Activated T-helper 2 cell treated with anti-CD3 and anti-CD28 coated beads, Interferon-gamma antibody, Interleukin-2, Interleukin-4, amounts not matched to agents 10 μg/mL and 5 μg/mL and 100 μg/mL, durations not matched to agents 14 hours and 24 hours and 36 hours (primary cell): ENCODE measurements at regions of chr15 and their contacts with region 1.

Region 1: GRCh38 chr15:31442203-31443111 is 115.8 kb downstream of the KLF13 start:
- DNase-seq: no peak
- H3K4me3 Mint-ChIP-seq: no peak overlapping the region
- H3K27ac Mint-ChIP-seq: peak overlapping the region; percentile 68
- H3K4me1 Mint-ChIP-seq: peaks cover 54% of the 10 kb centered on the region
- H3K27me3 Mint-ChIP-seq: no peaks in the 10 kb centered on the region

Region 2: GRCh38 chr15:31292391-31293015 is 150.0 kb before region 1 on chr15:
- intact Hi-C with region 1: no loop called
- DNase-seq: peak; percentile 1
- H3K4me3 Mint-ChIP-seq: no peak overlapping the region
- H3K27ac Mint-ChIP-seq: no peak overlapping the region
- H3K4me1 Mint-ChIP-seq: no peaks in the 10 kb centered on the region
- H3K27me3 Mint-ChIP-seq: peaks cover 72% of the 10 kb centered on the region

Region 3: DNA sequence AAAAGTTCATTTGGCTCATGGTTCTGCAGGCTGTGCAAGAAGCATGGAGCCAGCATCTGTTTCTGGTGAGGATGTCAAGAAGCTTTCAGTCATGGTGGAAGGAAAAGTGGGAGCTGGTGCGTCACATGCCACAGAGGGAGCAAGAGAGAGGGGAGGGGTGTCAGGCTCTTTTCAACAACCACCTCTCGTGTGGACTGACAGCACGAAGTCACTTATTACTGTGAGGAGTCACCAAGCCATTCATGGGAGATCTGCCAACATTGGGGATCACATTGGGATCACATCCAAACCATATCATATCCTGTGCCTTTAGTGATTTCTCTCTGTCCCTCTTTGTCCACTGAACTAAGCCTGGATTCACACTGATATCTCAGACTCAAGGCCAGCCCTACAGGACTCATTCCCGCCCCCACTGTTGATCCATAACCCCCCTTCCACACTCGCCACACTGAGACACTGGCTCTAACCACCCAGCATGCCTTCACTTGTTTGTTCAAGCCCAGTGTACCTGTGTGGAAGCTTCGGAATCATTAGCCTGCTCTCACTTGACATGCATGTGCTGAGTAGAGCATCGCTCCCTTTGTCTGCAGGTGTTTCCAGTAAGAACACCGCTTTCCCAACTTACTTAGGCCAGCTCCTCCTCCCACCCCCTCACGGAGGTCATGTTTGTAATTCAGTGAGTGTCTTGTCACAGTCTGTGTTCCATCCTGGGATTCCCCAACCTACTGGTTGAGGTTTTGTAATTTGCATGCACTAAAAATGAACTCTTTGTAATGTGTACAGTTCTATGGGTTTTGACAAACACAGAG is 16.3 kb after region 1 on chr15:
- intact Hi-C with region 1: loop called (anchors 1 kb)
- DNase-seq: no peak
- H3K4me3 Mint-ChIP-seq: peak overlapping the region; percentile 48
- H3K27ac Mint-ChIP-seq: peak overlapping the region; percentile 80
- H3K4me1 Mint-ChIP-seq: peaks cover 26% of the 10 kb centered on the region
- H3K27me3 Mint-ChIP-seq: no peaks in the 10 kb centered on the region

Region 4: GRCh38 chr15:31740203-31740602 is 297.7 kb after region 1 on chr15:
- intact Hi-C with region 1: no loop called
- DNase-seq: no peak
- H3K4me3 Mint-ChIP-seq: no peak overlapping the region
- H3K27ac Mint-ChIP-seq: no peak overlapping the region
- H3K4me1 Mint-ChIP-seq: no peaks in the 10 kb centered on the region
- H3K27me3 Mint-ChIP-seq: peaks cover 1% of the 10 kb centered on the region

Region 5: DNA sequence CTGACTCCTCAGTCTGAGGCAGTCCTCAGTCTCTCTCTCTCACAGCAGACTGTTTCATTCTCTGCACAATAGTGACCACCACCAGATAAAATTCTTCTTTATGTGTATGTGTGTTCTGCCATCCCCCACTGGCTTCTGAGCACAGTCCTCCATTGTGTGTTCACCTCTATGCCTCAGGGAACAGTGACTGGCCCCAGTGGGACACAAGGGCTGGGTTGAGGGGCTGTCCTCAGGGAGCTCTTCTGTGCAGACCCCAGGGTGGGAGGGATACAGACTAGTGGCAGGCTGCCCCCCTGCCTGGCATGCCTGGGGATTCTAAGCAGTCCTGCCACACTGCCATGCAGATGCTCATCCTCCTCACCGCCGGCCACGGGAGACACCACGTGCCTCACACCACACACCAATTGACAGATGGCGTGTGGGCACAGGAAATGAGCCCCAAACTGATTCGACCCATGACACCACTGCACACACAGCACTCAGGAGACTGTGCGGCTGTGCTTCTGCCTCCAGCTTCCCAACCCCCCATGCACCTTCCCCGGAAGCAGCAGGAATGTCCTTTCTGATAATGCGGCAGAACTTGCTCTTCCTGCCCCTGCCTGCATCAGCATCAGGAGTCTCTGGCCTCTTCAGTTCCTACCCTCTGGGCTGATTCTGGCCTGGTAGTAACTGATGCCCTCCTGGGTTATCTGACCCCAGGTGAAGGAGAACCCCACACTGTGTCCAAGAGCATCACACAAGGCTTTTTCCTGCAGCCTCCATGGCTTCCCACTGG is 350.3 kb after region 1 on chr15:
- intact Hi-C with region 1: no loop called
- DNase-seq: no peak
- H3K4me3 Mint-ChIP-seq: no peak overlapping the region
- H3K27ac Mint-ChIP-seq: no peak overlapping the region
- H3K4me1 Mint-ChIP-seq: no peaks in the 10 kb centered on the region
- H3K27me3 Mint-ChIP-seq: no peaks in the 10 kb centered on the region